Tibial artery (tissue), 4 donors: ENCODE measurements at regions of chr19 and their contacts with region 1.

Region 1: DNA sequence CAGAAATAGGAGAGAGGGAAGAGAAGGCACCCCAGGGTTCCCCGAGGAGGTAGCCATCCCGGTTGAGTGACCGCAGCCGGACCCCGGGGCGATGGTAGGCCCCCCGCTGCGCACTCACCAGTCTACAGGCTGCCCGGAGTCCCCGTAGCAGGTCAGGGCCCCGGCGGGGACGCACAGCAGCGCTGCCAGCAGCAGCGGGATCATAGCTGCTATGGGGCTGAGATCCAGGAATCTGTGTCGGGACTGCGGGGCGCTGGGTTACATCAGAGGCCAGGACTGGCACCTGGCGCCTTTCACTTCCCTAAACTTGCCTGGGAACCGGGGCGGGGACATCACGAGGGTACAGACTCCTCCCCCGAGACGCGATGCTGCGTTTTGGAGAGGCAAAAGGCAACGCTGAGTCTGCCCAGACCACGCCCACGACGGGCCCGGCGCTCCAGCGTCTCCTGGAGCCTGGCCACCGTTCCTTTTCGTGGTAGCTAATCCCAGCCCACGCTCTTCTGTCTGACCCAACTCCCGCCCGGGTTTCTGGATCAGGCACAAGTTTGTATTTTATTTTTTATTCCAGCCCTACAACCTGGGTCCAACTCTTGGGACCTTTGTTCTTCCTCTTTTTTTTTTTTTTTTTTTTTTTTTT is at the start of gene DNASE2:
- DNase-seq: peak; percentile 98 to 99
- H3K4me3 ChIP-seq: peak within 1 kb of the TSS; percentile 77 to 78
- H3K27ac ChIP-seq: peak within 1 kb of the TSS; percentile 95
- H3K4me1 ChIP-seq: peaks cover 0 to 33% (median 20%) of the 10 kb centered on the region in 4 donors
- H3K27me3 ChIP-seq: peaks cover 0 to 26% of the 10 kb centered on the region in 2 donors
- CTCF ChIP-seq: no peak

Region 2: GRCh38 chr19:12945479-12946091 is 64.3 kb after region 1 on chr19 and contains the start of gene RAD23A:
- intact Hi-C with region 1: loop called (anchors 10 kb)
- DNase-seq: peak; percentile 97 to 98
- H3K4me3 ChIP-seq: peak within 1 kb of the TSS; percentile 79 to 85
- H3K27ac ChIP-seq: peak within 1 kb of the TSS; percentile 89 to 90
- H3K4me1 ChIP-seq: peaks cover 0 to 36% (median 27%) of the 10 kb centered on the region in 4 donors
- H3K27me3 ChIP-seq: no peaks in the 10 kb centered on the region
- CTCF ChIP-seq: peak in 1 of 2 experiments; percentile 13

Region 3: DNA sequence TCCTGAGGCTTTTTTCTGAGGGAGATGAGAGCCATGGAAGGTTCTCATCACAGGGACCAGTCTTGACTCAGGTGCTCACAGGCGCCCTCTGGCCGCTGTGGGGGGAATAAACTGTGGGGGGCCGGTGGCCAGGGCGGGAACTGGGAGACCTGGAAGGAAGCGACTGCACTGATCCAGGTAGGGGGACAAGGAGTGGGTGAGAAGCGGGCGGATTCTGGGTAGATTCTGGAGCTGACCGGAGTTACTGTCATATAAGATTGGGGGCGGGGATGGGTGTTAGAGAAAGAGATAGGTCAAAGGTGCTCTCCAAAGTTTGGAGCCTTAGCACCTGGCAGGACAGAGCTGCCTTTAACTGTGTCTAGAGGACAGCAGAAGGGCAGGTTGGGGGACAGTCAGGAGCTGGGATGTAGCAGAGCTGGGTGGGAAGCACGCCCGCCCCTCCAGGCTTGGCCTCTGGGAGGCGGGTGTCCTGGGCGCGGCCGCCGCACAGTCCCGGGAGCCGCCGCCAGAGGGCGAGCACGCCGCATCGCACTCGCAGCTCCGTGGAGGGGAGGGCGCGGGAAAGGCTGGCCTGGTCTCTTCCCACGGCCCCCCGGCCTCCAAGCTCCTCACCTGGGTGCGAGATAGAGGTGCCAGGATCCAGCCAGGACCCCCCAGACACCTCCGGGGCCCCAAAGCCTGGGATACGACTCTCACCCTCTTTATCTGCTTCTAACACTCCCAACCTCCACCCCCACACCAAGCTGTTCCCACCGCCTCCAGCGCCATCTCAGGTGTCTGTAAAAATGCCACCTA is 83.9 kb after region 1 on chr19:
- intact Hi-C with region 1: loop called (anchors 5 kb)
- DNase-seq: peak; percentile 78 to 88
- H3K4me3 ChIP-seq: peak overlapping the region; percentile 45 to 46
- H3K27ac ChIP-seq: peak overlapping the region; percentile 48 to 62
- H3K4me1 ChIP-seq: peaks cover 0 to 15% (median 4%) of the 10 kb centered on the region in 4 donors
- H3K27me3 ChIP-seq: no peaks in the 10 kb centered on the region
- CTCF ChIP-seq: peak; percentile 90 to 96